OCI-LY7 (cell line): ENCODE measurements at regions of chr2 and their contacts with region 1.

Region 1: GRCh38 chr2:28894470-28895177 is at the start of gene WDR43:
- DNase-seq: peak; percentile 98
- H3K4me3 ChIP-seq: peak within 1 kb of the TSS; percentile 99
- H3K27ac ChIP-seq: peak within 1 kb of the TSS; percentile 61
- H3K4me1 ChIP-seq: peaks cover 35% of the 10 kb centered on the region
- CTCF ChIP-seq: no peak
- total RNA-seq, gene WDR43: 78.8 and 107 TPM in 2 replicates

Region 2: DNA sequence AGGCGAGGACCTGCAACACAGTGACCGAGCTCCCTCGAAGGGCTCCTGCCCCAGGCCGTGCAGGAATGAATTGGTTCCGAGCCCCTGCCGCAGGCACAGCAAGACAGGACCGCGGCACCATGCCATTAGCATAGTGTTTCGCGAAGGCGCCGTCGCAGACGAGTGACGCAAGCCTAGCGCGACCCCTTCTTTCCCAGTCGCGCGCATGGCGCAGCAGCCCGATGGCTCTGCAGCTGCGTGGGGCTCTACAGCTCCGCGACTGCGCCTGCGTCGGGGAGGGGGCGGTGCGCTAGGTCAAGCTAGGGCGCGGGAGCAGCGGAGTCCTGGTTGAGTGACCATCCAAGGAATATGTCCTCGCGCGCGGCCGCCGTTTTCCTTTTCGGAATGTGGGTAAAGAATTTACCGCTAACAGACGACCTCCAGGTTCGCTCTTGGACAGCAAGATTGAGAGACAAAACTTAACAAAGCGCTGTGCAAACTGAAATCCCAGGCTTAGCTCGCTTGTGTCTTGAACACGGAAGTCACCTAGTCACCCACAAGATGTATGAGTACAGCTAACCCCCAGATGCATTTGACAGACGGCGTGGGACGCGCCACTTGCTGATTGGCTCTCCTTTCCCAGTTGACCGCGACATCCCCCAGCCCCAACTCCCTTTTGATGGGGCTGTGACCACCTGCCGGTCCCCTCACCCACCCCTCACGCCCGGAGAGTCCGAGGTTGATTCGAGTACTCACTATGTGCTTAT is 24.3 kb before region 1 on chr2 and contains the start of gene TRMT61B:
- CTCF ChIA-PET with region 1: no interaction called
- POLR2A ChIA-PET with region 1: interaction called, 12 read pairs
- intact Hi-C with region 1: loop called (anchors 1 kb)
- DNase-seq: peak; percentile 97
- H3K4me3 ChIP-seq: peak within 1 kb of the TSS; percentile 78
- H3K27ac ChIP-seq: peak within 1 kb of the TSS; percentile 61
- H3K4me1 ChIP-seq: peaks cover 22% of the 10 kb centered on the region
- CTCF ChIP-seq: no peak
- total RNA-seq, gene TRMT61B: 18.3 and 22.7 TPM in 2 replicates